HCT116 (cell line): ENCODE measurements at regions of chr22 and their contacts with region 1.

Region 1: GRCh38 chr22:22687638-22688500 is 43.5 kb downstream of the GGTLC2 start:
- DNase-seq: no peak
- ATAC-seq: peak; percentile 89
- H3K4me3 ChIP-seq: no peak overlapping the region
- H3K27ac ChIP-seq: no peak overlapping the region
- H3K4me1 ChIP-seq: peaks cover 0 to 6% of the 10 kb centered on the region in 2 experiments; a peak in 3 of 4 replicates
- H3K27me3 ChIP-seq: no peaks in the 10 kb centered on the region
- CTCF ChIP-seq: peak; percentile 56 to 83 (median 82); a peak in 5 of 6 replicates
- POLR2A ChIP-seq: no peak
- RAD21 ChIP-seq: peak; percentile 58

Region 2: GRCh38 chr22:22702237-22703202 is 14.7 kb after region 1 on chr22:
- CTCF ChIA-PET with region 1: interaction called, 14 read pairs
- POLR2A ChIA-PET with region 1: no interaction called
- RAD21 ChIA-PET with region 1: no interaction called
- intact Hi-C with region 1: no loop called
- DNase-seq: no peak
- ATAC-seq: peak; percentile 88
- H3K4me3 ChIP-seq: no peak overlapping the region
- H3K27ac ChIP-seq: no peak overlapping the region
- H3K4me1 ChIP-seq: no peaks in the 10 kb centered on the region
- H3K27me3 ChIP-seq: no peaks in the 10 kb centered on the region
- CTCF ChIP-seq: peak; percentile 11 to 66 (median 49); a peak in 4 of 6 replicates
- POLR2A ChIP-seq: no peak
- RAD21 ChIP-seq: peak; percentile 35; the same call in 1 of the 2 replicates

Region 3: GRCh38 chr22:22710719-22711531 is 23.1 kb after region 1 on chr22:
- CTCF ChIA-PET with region 1: interaction called, 20 read pairs
- POLR2A ChIA-PET with region 1: no interaction called
- RAD21 ChIA-PET with region 1: no interaction called
- intact Hi-C with region 1: no loop called
- DNase-seq: no peak
- ATAC-seq: peak; percentile 96
- H3K4me3 ChIP-seq: no peak overlapping the region
- H3K27ac ChIP-seq: no peak overlapping the region
- H3K4me1 ChIP-seq: no peaks in the 10 kb centered on the region
- H3K27me3 ChIP-seq: no peaks in the 10 kb centered on the region
- CTCF ChIP-seq: peak; percentile 61 to 98 (median 97); a peak in 5 of 6 replicates
- POLR2A ChIP-seq: no peak
- RAD21 ChIP-seq: peak; percentile 34; the same call in 1 of the 2 replicates

Region 4: DNA sequence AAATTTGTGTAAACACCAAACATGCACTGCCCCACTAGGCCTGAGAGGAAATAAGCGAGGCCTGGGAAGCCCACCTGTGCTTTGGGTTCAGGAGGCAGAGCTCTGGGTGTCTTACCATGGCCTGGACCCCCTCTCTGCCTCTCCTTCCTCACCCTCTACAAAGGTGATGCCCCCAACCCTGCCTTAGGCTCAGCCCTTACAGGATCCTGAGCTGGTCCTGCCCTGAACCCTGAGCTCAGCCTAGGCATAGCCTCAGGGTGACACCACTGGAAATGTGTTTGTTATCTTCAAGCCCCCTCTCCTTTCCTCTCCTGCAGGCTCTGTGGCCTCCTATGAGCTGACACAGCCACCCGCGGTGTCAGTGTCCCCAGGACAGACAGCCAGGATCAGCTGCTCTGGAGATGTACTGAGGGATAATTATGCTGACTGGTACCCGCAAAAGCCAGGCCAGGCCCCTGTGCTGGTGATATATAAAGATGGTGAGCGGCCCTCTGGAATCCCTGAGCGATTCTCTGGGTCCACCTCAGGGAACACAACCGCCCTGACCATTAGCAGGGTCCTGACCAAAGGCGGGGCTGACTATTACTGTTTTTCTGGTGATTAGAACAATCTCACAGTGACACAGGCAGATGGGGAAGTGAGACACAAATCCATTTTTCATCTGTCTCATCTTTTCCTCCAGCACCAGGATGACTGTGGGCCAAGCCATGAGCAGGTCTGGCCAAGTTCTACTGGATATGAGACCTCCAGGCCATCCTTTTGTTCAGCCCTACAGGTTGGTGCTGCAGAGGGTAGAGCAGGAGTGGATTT is 74.3 kb after region 1 on chr22:
- CTCF ChIA-PET with region 1: no interaction called
- POLR2A ChIA-PET with region 1: no interaction called
- RAD21 ChIA-PET with region 1: no interaction called
- intact Hi-C with region 1: no loop called
- DNase-seq: no peak
- ATAC-seq: no peak
- H3K4me3 ChIP-seq: no peak overlapping the region
- H3K27ac ChIP-seq: no peak overlapping the region
- H3K4me1 ChIP-seq: no peaks in the 10 kb centered on the region
- H3K27me3 ChIP-seq: peaks cover 4% of the 10 kb centered on the region; the same call in 1 of the 2 replicates
- CTCF ChIP-seq: no peak
- POLR2A ChIP-seq: no peak
- RAD21 ChIP-seq: no peak